ENCODE measurements at regions of chr7 and their contacts with region 1.

Region 1: GRCh38 chr7:126690848-126691751 is 561.6 kb downstream of the GRM8 start:
- DNase-seq: no peak
- ATAC-seq: no peak
- H3K4me3 ChIP-seq: no peak overlapping the region
- H3K4me3 Mint-ChIP-seq: no peak overlapping the region
- H3K27ac ChIP-seq: no peak overlapping the region
- H3K27ac Mint-ChIP-seq: no peak overlapping the region
- H3K4me1 ChIP-seq: no peaks in the 10 kb centered on the region
- H3K4me1 Mint-ChIP-seq: no peaks in the 10 kb centered on the region
- H3K27me3 ChIP-seq: no peaks in the 10 kb centered on the region
- H3K27me3 Mint-ChIP-seq: peaks cover 2% of the 10 kb centered on the region
- CTCF ChIP-seq: no peak

Region 2: DNA sequence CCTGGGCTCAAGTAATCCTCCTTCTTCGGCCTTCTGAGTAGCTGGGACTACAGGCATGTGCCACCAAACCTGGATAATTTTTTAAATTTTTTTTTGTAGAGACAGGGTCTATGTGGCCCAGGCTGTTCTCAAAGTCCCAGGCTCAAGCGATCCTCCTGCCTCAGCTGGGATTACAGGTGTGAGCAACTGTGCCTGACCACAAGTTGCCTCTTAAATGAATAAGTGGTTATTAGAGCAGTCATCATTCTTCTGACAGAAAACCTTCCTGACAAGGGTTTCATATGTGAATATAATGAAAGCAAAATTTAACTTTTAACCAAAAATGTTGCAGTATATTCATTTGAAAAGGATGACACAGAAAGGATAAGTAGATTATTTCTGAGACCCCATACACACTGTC is 29.1 kb after region 1 on chr7:
- CTCF ChIA-PET with region 1: no interaction called
- POLR2A ChIA-PET with region 1: no interaction called
- intact Hi-C with region 1: loop called in 1 of 2 experiments (anchors 1 kb)
- DNase-seq: no peak
- ATAC-seq: no peak
- H3K4me3 ChIP-seq: no peak overlapping the region
- H3K4me3 Mint-ChIP-seq: no peak overlapping the region
- H3K27ac ChIP-seq: no peak overlapping the region
- H3K27ac Mint-ChIP-seq: no peak overlapping the region
- H3K4me1 ChIP-seq: no peaks in the 10 kb centered on the region
- H3K4me1 Mint-ChIP-seq: no peaks in the 10 kb centered on the region
- H3K27me3 ChIP-seq: no peaks in the 10 kb centered on the region
- H3K27me3 Mint-ChIP-seq: no peaks in the 10 kb centered on the region
- CTCF ChIP-seq: no peak

Region 3: GRCh38 chr7:127359011-127359410 is 667.9 kb after region 1 on chr7:
- CTCF ChIA-PET with region 1: no interaction called
- POLR2A ChIA-PET with region 1: no interaction called
- intact Hi-C with region 1: no loop called
- DNase-seq: no peak
- ATAC-seq: no peak
- H3K4me3 ChIP-seq: no peak overlapping the region
- H3K4me3 Mint-ChIP-seq: no peak overlapping the region
- H3K27ac ChIP-seq: no peak overlapping the region
- H3K27ac Mint-ChIP-seq: peak overlapping the region; percentile 47
- H3K4me1 ChIP-seq: no peaks in the 10 kb centered on the region
- H3K4me1 Mint-ChIP-seq: peaks cover 21% of the 10 kb centered on the region
- H3K27me3 ChIP-seq: no peaks in the 10 kb centered on the region
- H3K27me3 Mint-ChIP-seq: no peaks in the 10 kb centered on the region
- CTCF ChIP-seq: no peak

Region 4: GRCh38 chr7:127858091-127858914 is 1167.2 kb after region 1 on chr7:
- CTCF ChIA-PET with region 1: no interaction called
- POLR2A ChIA-PET with region 1: no interaction called
- intact Hi-C with region 1: no loop called
- DNase-seq: no peak
- ATAC-seq: no peak
- H3K4me3 ChIP-seq: no peak overlapping the region
- H3K4me3 Mint-ChIP-seq: no peak overlapping the region
- H3K27ac ChIP-seq: no peak overlapping the region
- H3K27ac Mint-ChIP-seq: no peak overlapping the region
- H3K4me1 ChIP-seq: peaks cover 42% of the 10 kb centered on the region
- H3K4me1 Mint-ChIP-seq: peaks cover 48% of the 10 kb centered on the region
- H3K27me3 ChIP-seq: peaks cover 0 to 3% of the 10 kb centered on the region in 2 experiments
- H3K27me3 Mint-ChIP-seq: peaks cover 14% of the 10 kb centered on the region
- CTCF ChIP-seq: no peak

Measured in CD8-positive, alpha-beta T cell (primary cell).